H1 (cell line): ENCODE measurements at regions of chr1 and their contacts with region 1.

Region 1: GRCh38 chr1:91165033-91165654 is 143.3 kb upstream of the ZNF644 start:
- DNase-seq: peak; percentile 68 to 97
- H3K4me3 ChIP-seq: no peak overlapping the region
- H3K27ac ChIP-seq: no peak overlapping the region
- H3K4me1 ChIP-seq: peaks cover 0 to 10% (median 3%) of the 10 kb centered on the region in 4 experiments; a peak in 4 of 7 replicates
- H3K27me3 ChIP-seq: peaks cover 0 to 4% (median 0%) of the 10 kb centered on the region in 4 experiments; a peak in 3 of 7 replicates
- CTCF ChIP-seq: peak; percentile 93 to 99 (median 99)
- EP300 ChIP-seq: no peak
- POLR2A ChIP-seq: no peak
- RAD21 ChIP-seq: peak; percentile 95 to 98

Region 2: DNA sequence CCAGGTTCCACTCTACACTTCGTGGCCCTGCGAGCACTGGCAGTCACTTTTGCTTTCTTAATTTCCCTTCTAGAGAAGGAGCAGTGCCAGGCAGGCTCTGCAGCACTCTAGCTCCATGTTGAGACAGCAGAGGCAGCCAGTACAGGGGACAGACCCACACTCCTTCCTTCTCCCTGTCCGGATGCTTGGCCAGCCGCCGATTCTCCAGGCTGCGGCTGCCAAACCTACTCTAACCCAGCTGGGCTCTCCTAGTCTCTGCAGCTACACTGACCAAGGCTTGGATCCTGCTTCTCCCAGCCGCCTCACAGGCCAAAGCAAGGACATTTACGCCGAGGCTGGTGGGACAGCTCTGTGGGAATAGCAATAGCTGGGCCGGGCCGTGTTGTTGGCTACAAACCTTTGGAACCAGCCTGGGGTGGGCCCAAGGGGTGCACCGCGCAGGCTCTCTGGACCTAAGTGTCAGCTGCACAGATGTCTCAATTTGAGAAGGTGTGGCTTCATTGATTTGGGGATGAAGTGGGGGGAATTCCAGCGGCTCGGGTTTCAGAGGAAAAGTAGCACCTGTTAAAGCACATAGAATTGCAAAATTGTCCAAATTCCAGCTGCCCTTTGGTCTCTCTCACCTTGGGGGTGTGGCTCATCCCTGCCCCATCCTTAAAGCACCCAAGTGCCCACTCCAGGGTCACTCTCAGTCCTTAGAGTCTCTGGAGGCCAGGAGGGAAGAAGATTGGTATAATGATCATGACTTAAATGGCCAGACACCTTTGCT is 451.2 kb before region 1 on chr1:
- CTCF ChIA-PET with region 1: interaction called, 13 read pairs
- POLR2A ChIA-PET with region 1: no interaction called
- DNase-seq: peak in 1 of 2 experiments; percentile 69
- H3K4me3 ChIP-seq: peak overlapping the region in 2 of 4 experiments; percentile 8 to 11; a peak in 1 of 8 replicates
- H3K27ac ChIP-seq: no peak overlapping the region
- H3K4me1 ChIP-seq: peaks cover 11 to 49% (median 26%) of the 10 kb centered on the region in 4 experiments
- H3K27me3 ChIP-seq: peaks cover 90 to 99% (median 96%) of the 10 kb centered on the region in 4 experiments
- CTCF ChIP-seq: no peak
- EP300 ChIP-seq: no peak
- POLR2A ChIP-seq: no peak
- RAD21 ChIP-seq: no peak

Region 3: DNA sequence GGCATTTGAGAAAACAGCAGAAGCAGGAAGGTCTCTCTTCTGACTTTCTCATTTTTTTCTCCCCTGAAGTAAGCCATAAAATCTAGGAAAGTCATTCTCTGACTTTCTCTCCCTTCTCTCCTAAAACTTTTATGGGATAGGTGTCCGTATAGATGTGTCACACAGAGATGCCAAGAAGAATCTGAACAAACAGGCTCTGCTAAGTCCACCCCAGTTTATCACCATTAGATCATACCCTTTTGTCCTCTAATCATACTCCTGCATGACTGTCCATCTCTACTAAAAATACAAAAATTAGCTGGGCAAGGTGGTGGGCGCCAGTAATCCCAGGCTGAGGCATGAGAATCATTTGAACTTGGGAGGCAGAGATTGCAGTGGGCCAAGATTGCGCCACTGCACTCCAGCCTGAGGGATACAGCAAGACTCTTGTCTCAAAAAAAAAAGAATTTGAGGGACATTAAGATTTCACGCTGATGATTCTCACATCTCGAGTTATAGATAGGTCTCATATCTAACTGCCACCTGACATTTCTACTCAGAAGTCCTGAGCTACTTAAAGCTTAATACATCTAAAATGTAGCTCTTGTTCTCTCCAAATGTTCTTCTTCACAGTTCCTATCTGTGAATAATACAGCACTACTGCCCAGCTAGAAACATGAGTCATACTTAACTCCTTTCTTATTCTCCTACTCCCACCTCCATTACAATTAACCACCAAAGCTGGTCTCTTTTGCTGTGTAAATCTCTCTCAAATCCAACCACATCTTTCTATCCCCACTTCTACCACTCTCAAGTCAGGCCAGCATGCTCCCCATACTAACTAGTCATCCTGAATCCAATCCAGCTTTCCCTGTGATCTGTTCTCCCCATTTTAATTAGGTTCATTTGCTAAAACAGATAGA is 191.0 kb before region 1 on chr1:
- CTCF ChIA-PET with region 1: interaction called, 13 read pairs
- POLR2A ChIA-PET with region 1: interaction called, 3 read pairs
- DNase-seq: peak in 1 of 2 experiments; percentile 21
- H3K4me3 ChIP-seq: peak overlapping the region in 1 of 4 experiments; percentile 19; a peak in 1 of 8 replicates
- H3K27ac ChIP-seq: no peak overlapping the region; the same call in none of the 2 replicates
- H3K4me1 ChIP-seq: peaks cover 2 to 7% (median 6%) of the 10 kb centered on the region in 4 experiments
- H3K27me3 ChIP-seq: no peaks in the 10 kb centered on the region
- CTCF ChIP-seq: no peak
- EP300 ChIP-seq: no peak
- POLR2A ChIP-seq: no peak
- RAD21 ChIP-seq: no peak

Region 4: DNA sequence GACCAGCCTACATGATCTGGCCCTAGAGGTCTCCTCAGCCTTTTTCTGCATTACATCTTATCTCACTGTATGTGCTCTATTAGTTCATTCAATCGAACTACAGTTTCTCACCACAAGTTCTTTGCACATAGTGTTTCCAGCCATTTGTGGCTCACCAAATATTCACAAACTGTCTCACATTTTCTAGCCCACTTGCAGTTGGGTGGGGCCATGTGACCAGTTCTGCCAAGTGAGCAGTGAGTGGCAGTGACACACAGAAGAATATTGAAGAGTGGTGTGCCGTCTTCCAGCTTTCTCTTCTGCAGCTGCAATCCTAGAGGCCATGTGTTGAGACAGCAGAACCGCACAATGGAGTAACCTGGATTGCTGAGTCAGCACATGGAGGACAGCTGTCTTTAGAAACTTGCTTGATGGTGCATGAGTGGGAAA is 40.1 kb before region 1 on chr1:
- CTCF ChIA-PET with region 1: interaction called, 30 read pairs
- POLR2A ChIA-PET with region 1: no interaction called
- DNase-seq: no peak
- H3K4me3 ChIP-seq: no peak overlapping the region
- H3K27ac ChIP-seq: no peak overlapping the region
- H3K4me1 ChIP-seq: peaks cover 6 to 35% (median 27%) of the 10 kb centered on the region in 4 experiments
- H3K27me3 ChIP-seq: no peaks in the 10 kb centered on the region; a peak in 1 of 7 replicates
- CTCF ChIP-seq: no peak
- EP300 ChIP-seq: no peak
- POLR2A ChIP-seq: no peak
- RAD21 ChIP-seq: no peak

Region 5: DNA sequence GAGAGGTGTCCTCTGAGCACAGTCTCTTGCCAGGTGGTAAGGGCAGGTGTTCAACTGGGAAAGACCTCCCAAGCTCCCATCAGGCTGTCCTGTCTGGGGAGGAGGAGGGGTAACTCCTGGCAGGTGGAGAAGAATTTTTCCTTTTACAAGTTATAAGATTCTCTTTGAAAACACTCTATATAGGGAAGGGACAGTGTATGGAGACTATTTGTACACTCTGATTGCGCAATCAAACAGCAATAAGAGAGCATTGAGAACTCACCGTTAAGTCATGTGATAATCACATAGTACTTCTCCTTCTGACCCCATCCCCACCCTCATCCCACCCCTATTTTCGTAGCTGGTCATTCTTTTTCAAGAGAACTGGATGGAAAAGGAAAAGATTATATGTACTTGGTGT is 36.0 kb after region 1 on chr1:
- CTCF ChIA-PET with region 1: interaction called, 12 read pairs
- POLR2A ChIA-PET with region 1: no interaction called
- DNase-seq: no peak
- H3K4me3 ChIP-seq: no peak overlapping the region
- H3K27ac ChIP-seq: no peak overlapping the region
- H3K4me1 ChIP-seq: peaks cover 0 to 5% (median 0%) of the 10 kb centered on the region in 4 experiments; a peak in 2 of 7 replicates
- H3K27me3 ChIP-seq: no peaks in the 10 kb centered on the region
- CTCF ChIP-seq: no peak
- EP300 ChIP-seq: no peak
- POLR2A ChIP-seq: no peak
- RAD21 ChIP-seq: no peak

Region 6: DNA sequence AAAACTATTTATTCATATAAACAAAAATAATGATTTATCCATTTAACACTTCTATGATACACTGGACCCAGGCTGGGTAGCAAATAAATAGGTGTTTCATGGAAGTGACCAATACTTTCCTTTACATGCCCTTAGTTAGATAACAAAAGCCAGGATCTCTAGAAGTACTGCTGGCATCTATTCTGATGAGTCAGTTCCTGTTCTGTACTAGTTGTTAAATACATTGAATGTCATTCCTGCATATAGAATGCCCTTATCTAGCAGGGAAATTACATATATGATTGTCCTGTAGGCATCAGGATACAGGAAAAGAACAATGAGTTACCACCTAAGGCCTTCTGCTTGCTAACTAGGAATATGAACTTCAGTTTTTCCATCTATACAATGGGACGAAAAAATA is 108.7 kb after region 1 on chr1:
- CTCF ChIA-PET with region 1: interaction called, 230 read pairs
- POLR2A ChIA-PET with region 1: interaction called, 7 read pairs
- DNase-seq: no peak
- H3K4me3 ChIP-seq: no peak overlapping the region
- H3K27ac ChIP-seq: no peak overlapping the region
- H3K4me1 ChIP-seq: no peaks in the 10 kb centered on the region
- H3K27me3 ChIP-seq: no peaks in the 10 kb centered on the region
- CTCF ChIP-seq: no peak
- EP300 ChIP-seq: no peak
- POLR2A ChIP-seq: no peak
- RAD21 ChIP-seq: no peak

Region 7: GRCh38 chr1:91303165-91303564 is 138.0 kb after region 1 on chr1:
- CTCF ChIA-PET with region 1: no interaction called
- POLR2A ChIA-PET with region 1: no interaction called
- DNase-seq: no peak
- H3K4me3 ChIP-seq: no peak overlapping the region
- H3K27ac ChIP-seq: no peak overlapping the region
- H3K4me1 ChIP-seq: no peaks in the 10 kb centered on the region
- H3K27me3 ChIP-seq: no peaks in the 10 kb centered on the region
- CTCF ChIP-seq: no peak
- EP300 ChIP-seq: no peak
- POLR2A ChIP-seq: no peak
- RAD21 ChIP-seq: no peak